Activated CD4-positive, alpha-beta T cell treated with anti-CD3 and anti-CD28 coated beads, Interleukin-2, amount 10 ng/mL, durations not matched to agents 24 days and 14 days (primary cell): ENCODE measurements at regions of chr7 and their contacts with region 1.

Region 1: DNA sequence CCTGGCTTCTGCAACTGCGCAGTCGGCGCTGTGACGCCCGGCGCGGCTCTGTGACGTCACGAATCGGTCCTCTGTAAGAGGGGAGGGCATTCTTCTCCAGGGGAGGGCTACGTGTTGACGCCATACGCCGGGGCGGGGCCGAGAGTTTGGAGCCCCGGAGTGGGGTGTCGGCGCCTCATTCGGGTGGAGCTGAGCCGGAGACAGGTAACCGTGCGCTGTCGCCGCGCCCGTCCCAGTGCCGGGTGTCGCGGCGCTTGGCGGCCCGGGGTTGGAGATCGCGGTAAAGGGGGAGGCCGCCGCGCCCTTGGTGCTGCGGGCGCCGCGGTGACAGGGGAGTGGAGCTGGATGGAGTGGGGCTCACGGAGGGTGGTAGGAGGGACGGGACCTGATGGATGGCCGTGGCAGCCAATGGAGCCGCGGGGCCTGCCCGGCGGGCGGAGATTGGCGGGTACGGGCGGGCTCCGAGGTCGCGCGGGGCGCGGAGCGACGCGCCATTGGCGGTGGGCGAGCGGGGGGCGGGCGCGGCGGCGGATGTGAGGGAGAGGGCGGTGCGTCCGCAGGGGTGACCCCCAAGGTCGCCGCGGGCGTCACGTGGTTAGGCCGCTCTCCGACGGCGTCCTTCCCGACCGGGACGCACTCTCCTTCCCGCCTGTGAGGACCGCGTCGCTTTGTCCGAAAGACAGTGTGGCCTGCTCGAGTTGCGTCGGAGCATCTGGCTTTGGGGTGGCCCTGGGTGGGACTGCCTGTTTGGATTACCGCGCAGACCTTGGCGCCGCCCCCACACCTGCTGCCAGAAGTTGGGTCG is at the start of gene OGDH:
- DNase-seq: peak; percentile 100
- H3K4me3 Mint-ChIP-seq: peak within 1 kb of the TSS; percentile 99
- H3K27ac Mint-ChIP-seq: peak within 1 kb of the TSS; percentile 100
- H3K4me1 Mint-ChIP-seq: peaks cover 30% of the 10 kb centered on the region
- H3K27me3 Mint-ChIP-seq: peaks cover 11% of the 10 kb centered on the region
- total RNA-seq, gene OGDH: 99.5 and 102 TPM in 2 replicates

Region 2: GRCh38 chr7:44581879-44582603 is 24.6 kb before region 1 on chr7 and contains the start of gene TMED4:
- intact Hi-C with region 1: loop called (anchors 1 kb)
- DNase-seq: peak; percentile 100
- H3K4me3 Mint-ChIP-seq: peak within 1 kb of the TSS; percentile 92
- H3K27ac Mint-ChIP-seq: peak within 1 kb of the TSS; percentile 92
- H3K4me1 Mint-ChIP-seq: peaks cover 35% of the 10 kb centered on the region
- H3K27me3 Mint-ChIP-seq: peaks cover 4% of the 10 kb centered on the region
- total RNA-seq, gene TMED4: 78.4 and 80.2 TPM in 2 replicates

Region 3: GRCh38 chr7:44622307-44623151 is 15.9 kb after region 1 on chr7:
- intact Hi-C with region 1: loop called (anchors 1 kb)
- DNase-seq: peak; percentile 83
- H3K4me3 Mint-ChIP-seq: peak overlapping the region; percentile 53
- H3K27ac Mint-ChIP-seq: peak overlapping the region; percentile 84
- H3K4me1 Mint-ChIP-seq: peaks cover 71% of the 10 kb centered on the region
- H3K27me3 Mint-ChIP-seq: no peaks in the 10 kb centered on the region

Region 4: DNA sequence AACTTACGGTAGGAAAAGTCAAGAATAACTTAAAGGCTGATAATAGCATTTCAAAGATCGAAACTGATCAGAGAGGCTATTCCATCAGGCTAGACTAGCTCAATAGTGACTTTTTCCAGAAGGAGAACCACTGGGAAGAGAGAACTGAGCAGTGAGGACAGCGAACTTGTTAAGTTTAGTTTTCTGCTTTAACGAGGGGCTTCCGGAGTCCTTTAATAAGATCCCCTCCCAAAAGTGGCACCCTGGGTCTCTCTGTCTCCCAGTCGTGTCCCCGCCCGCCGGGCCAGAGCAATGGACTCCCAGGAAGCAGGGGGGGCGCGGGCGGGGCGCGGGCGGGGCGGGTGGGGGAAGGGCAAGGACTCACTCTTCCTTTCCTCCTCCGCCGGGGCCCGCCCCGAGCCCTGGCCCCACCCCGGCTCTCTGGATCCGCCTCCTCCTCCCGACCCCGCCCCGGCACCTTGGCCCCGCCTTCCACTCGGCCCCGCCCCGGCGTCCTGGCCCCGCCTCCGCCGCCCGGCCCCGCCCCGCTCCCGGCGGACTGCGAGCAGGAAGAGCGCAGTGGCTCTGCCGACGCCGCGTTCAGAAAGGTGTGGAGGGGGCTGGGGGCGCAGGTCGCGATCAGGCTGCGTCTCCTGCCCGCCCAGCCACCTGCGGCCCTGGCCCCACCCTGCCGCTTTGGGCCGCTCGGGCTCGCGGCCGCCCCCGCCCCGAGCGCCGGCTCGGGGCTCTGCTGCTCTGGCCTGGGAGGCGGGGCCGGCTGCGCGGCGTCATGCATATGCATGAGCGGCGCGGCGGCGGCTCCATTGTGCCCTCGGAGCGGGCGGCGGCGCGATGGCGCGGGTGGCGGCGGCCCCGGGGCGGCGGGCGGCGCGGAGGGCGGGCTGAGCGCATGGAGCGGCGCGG is 141.6 kb after region 1 on chr7 and contains the start of gene ZMIZ2:
- intact Hi-C with region 1: loop called (anchors 1 kb)
- DNase-seq: peak; percentile 97
- H3K4me3 Mint-ChIP-seq: peak within 1 kb of the TSS; percentile 93
- H3K27ac Mint-ChIP-seq: peak within 1 kb of the TSS; percentile 89
- H3K4me1 Mint-ChIP-seq: peaks cover 33% of the 10 kb centered on the region
- H3K27me3 Mint-ChIP-seq: no peaks in the 10 kb centered on the region
- total RNA-seq, gene ZMIZ2: 130 and 133 TPM in 2 replicates

Region 5: GRCh38 chr7:44980393-44981034 is 373.9 kb after region 1 on chr7:
- intact Hi-C with region 1: loop called (anchors 5 kb)
- DNase-seq: peak; percentile 89
- H3K4me3 Mint-ChIP-seq: peak overlapping the region; percentile 93
- H3K27ac Mint-ChIP-seq: peak overlapping the region; percentile 90
- H3K4me1 Mint-ChIP-seq: peaks cover 63% of the 10 kb centered on the region
- H3K27me3 Mint-ChIP-seq: no peaks in the 10 kb centered on the region

Region 6: DNA sequence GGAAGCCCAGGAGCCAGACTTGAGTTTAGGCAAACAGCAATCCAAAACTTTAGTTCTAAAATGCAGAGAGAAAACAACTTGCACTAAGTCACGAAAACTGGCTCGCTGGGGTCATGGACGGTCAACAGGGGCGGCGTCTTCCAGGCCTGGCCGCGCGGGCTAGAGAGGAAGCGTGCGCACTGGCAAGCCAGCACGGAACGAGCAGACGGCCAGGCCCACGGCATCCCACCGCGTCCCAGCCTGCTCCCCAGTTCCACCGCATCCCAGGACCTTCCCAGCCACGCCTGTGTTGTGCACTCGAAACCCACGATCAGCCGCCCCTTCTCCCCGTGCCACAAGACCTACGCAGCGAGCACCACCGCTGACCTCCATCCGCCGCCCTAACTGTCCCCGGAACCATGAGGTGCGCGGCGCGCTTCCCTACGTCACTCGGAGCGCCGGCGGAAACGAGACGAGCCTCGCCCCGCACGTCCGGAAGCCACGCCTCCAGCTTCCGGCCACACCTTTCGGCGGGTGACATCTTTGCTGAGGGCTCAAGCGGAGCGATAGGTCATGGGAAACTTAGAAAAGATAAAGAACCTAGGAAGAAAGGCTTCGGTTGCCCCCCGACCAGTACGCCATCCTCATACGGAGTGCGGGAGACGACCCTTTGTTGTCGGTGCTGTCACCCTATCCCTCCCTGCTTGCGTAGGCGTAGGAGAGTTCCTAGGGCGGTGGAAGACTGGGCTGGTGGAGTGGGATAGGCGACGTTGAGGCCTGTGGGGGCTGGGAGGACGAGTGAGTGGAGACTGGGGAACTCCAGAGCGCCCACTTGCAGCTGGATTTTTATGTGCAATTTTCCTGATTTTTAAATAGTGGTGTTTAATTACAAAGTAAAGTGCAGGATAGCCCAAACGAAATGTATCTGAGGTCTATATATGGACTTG is 504.9 kb after region 1 on chr7 and contains the start of gene TBRG4:
- intact Hi-C with region 1: loop called (anchors 2 kb)
- DNase-seq: peak; percentile 99
- H3K4me3 Mint-ChIP-seq: peak within 1 kb of the TSS; percentile 98
- H3K27ac Mint-ChIP-seq: peak within 1 kb of the TSS; percentile 99
- H3K4me1 Mint-ChIP-seq: peaks cover 35% of the 10 kb centered on the region
- H3K27me3 Mint-ChIP-seq: peaks cover 21% of the 10 kb centered on the region
- total RNA-seq, gene TBRG4: 192 and 198 TPM in 2 replicates